ENCODE measurements at regions of chr13 and their contacts with region 1.

Region 1: GRCh38 chr13:20945952-20946383 is 43.4 kb upstream of the XPO4 start:
- DNase-seq: peak in 1 of 2 donors; percentile 34
- H3K4me3 ChIP-seq: peak overlapping the region in 1 of 2 donors; percentile 14
- H3K27ac ChIP-seq: no peak overlapping the region
- H3K4me1 ChIP-seq: peaks cover 0 to 11% (median 4%) of the 10 kb centered on the region in 4 donors
- H3K27me3 ChIP-seq: no peaks in the 10 kb centered on the region
- CTCF ChIP-seq: no peak

Region 2: GRCh38 chr13:21060987-21061763 is 115.2 kb after region 1 on chr13 and contains the start of gene LATS2:
- intact Hi-C with region 1: loop called (anchors 10 kb)
- DNase-seq: peak; percentile 97 to 98
- H3K4me3 ChIP-seq: peak within 1 kb of the TSS; percentile 90 to 97
- H3K27ac ChIP-seq: peak within 1 kb of the TSS; percentile 97 to 100
- H3K4me1 ChIP-seq: peaks cover 0 to 58% (median 33%) of the 10 kb centered on the region in 4 donors
- H3K27me3 ChIP-seq: no peaks in the 10 kb centered on the region
- CTCF ChIP-seq: peak; percentile 34 to 35

Region 3: DNA sequence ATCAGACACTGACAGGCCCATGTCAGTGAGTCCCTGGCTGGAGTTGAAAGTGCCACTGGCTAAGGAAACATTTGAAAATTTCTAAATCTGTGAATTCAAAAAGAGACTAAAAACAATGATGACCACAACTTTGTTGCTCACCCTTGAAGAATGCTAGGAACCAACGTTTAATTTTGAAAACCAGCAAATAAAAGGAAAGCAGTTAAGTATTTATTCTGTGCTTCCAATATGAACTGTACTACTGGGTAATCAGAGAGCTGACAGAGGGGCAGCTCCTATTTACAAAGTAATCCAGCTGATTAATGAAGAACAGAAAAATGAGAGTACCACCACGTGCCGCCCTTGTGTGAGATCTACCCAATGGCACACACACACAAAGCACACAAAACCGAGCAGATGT is 160.1 kb after region 1 on chr13:
- intact Hi-C with region 1: no loop called
- DNase-seq: no peak
- H3K4me3 ChIP-seq: no peak overlapping the region
- H3K27ac ChIP-seq: no peak overlapping the region
- H3K4me1 ChIP-seq: no peaks in the 10 kb centered on the region
- H3K27me3 ChIP-seq: no peaks in the 10 kb centered on the region
- CTCF ChIP-seq: no peak

Region 4: DNA sequence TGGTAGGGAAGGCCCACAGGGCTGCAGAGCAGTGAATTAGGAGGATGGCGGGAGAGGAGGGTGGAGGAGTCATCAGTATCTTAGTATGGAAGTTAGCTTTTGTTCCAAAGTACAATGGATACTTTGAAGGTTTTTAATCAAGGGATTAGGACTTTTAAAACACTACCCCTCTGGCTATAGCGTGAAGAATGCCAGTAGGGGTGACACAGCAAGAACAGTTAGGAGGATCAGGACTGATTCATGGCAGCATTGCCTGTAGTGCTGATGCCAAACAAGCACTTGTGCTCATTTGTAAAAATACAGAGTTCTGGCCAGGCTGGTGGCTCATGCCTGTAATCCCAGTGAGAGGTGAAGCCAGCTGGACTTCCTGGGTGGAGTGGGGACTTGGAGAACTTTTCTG is 184.1 kb after region 1 on chr13:
- intact Hi-C with region 1: loop called (anchors 5 kb)
- DNase-seq: no peak
- H3K4me3 ChIP-seq: no peak overlapping the region
- H3K27ac ChIP-seq: no peak overlapping the region
- H3K4me1 ChIP-seq: no peaks in the 10 kb centered on the region
- H3K27me3 ChIP-seq: no peaks in the 10 kb centered on the region
- CTCF ChIP-seq: no peak

Region 5: GRCh38 chr13:21297914-21298831 is 352.2 kb after region 1 on chr13:
- intact Hi-C with region 1: loop called (anchors 10 kb)
- DNase-seq: peak; percentile 80 to 85
- H3K4me3 ChIP-seq: peak overlapping the region; percentile 76 to 89
- H3K27ac ChIP-seq: peak overlapping the region; percentile 78 to 79
- H3K4me1 ChIP-seq: peaks cover 0 to 21% (median 6%) of the 10 kb centered on the region in 4 donors
- H3K27me3 ChIP-seq: no peaks in the 10 kb centered on the region
- CTCF ChIP-seq: peak; percentile 80 to 88

Region 6: DNA sequence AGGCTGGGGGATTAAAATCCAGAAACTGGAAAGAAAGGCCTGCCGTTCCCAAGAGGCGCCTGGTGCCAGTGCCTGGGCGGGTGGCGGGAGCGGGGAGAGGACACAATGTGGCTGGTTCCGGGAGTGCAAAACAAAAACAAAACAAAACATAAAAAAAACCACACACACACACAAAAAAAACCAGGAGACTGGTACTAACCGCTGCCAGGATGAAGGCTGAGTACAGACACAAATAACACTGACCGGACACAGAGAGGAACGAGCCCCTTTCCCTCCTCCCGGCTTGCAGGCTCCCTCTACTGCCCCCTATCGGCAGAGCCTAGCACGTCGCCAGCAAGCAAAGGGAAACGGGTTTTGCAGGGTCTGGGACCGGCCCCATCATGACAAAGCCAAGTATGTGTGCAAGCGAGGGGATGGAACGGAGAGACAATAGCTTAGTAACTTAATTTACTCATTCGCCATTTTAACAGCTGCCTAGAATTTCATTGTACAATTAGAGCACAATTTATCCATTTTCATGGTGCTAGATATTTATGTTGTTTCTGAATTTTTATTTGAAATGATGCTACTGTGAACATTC is 531.0 kb after region 1 on chr13:
- intact Hi-C with region 1: loop called (anchors 10 kb)
- DNase-seq: peak; percentile 74 to 82
- H3K4me3 ChIP-seq: peak overlapping the region; percentile 40 to 46
- H3K27ac ChIP-seq: no peak overlapping the region
- H3K4me1 ChIP-seq: peaks cover 0 to 15% (median 7%) of the 10 kb centered on the region in 4 donors
- H3K27me3 ChIP-seq: no peaks in the 10 kb centered on the region
- CTCF ChIP-seq: peak; percentile 79 to 88

Measured in tibial artery (tissue), 4 donors.